ENCODE measurements at regions of chr6 and their contacts with region 1.

Region 1: GRCh38 chr6:2931970-2932748 is 29.1 kb upstream of the SERPINB9 start:
- DNase-seq: peak; percentile 74 to 90 (median 86)
- ATAC-seq: peak; percentile 86
- H3K4me3 ChIP-seq: no peak overlapping the region
- H3K4me3 Mint-ChIP-seq: peak overlapping the region; percentile 45
- H3K27ac ChIP-seq: no peak overlapping the region
- H3K27ac Mint-ChIP-seq: peak overlapping the region; percentile 38
- H3K4me1 ChIP-seq: peaks cover 27% of the 10 kb centered on the region
- H3K4me1 Mint-ChIP-seq: peaks cover 27% of the 10 kb centered on the region
- H3K27me3 ChIP-seq: no peaks in the 10 kb centered on the region
- H3K27me3 Mint-ChIP-seq: no peaks in the 10 kb centered on the region
- CTCF ChIP-seq: peak; percentile 92

Region 2: GRCh38 chr6:2634139-2634964 is 297.8 kb before region 1 on chr6:
- CTCF ChIA-PET with region 1: no interaction called
- POLR2A ChIA-PET with region 1: no interaction called
- intact Hi-C with region 1: no loop called
- DNase-seq: peak; percentile 62 to 92 (median 80)
- ATAC-seq: peak; percentile 95
- H3K4me3 ChIP-seq: peak overlapping the region; percentile 35 to 52
- H3K4me3 Mint-ChIP-seq: peak overlapping the region; percentile 70
- H3K27ac ChIP-seq: no peak overlapping the region
- H3K27ac Mint-ChIP-seq: no peak overlapping the region
- H3K4me1 ChIP-seq: peaks cover 6% of the 10 kb centered on the region
- H3K4me1 Mint-ChIP-seq: peaks cover 9% of the 10 kb centered on the region
- H3K27me3 ChIP-seq: peaks cover 0 to 6% of the 10 kb centered on the region in 2 experiments
- H3K27me3 Mint-ChIP-seq: peaks cover 9% of the 10 kb centered on the region
- CTCF ChIP-seq: peak; percentile 90

Region 3: GRCh38 chr6:2841264-2842138 is 90.7 kb before region 1 on chr6 and contains the start of gene SERPINB1:
- CTCF ChIA-PET with region 1: interaction called, 306 read pairs
- POLR2A ChIA-PET with region 1: interaction called, 21 read pairs
- intact Hi-C with region 1: loop called (anchors 1 kb)
- DNase-seq: peak; percentile 47 to 88 (median 71)
- ATAC-seq: peak; percentile 77
- H3K4me3 ChIP-seq: peak within 1 kb of the TSS; percentile 56 to 76
- H3K4me3 Mint-ChIP-seq: peak within 1 kb of the TSS; percentile 88
- H3K27ac ChIP-seq: peak within 1 kb of the TSS; percentile 58 to 68
- H3K27ac Mint-ChIP-seq: peak within 1 kb of the TSS; percentile 92
- H3K4me1 ChIP-seq: peaks cover 30% of the 10 kb centered on the region
- H3K4me1 Mint-ChIP-seq: peaks cover 56% of the 10 kb centered on the region
- H3K27me3 ChIP-seq: no peaks in the 10 kb centered on the region
- H3K27me3 Mint-ChIP-seq: no peaks in the 10 kb centered on the region
- CTCF ChIP-seq: no peak
- total RNA-seq, gene SERPINB1: 48.8 to 50.7 TPM

Region 4: DNA sequence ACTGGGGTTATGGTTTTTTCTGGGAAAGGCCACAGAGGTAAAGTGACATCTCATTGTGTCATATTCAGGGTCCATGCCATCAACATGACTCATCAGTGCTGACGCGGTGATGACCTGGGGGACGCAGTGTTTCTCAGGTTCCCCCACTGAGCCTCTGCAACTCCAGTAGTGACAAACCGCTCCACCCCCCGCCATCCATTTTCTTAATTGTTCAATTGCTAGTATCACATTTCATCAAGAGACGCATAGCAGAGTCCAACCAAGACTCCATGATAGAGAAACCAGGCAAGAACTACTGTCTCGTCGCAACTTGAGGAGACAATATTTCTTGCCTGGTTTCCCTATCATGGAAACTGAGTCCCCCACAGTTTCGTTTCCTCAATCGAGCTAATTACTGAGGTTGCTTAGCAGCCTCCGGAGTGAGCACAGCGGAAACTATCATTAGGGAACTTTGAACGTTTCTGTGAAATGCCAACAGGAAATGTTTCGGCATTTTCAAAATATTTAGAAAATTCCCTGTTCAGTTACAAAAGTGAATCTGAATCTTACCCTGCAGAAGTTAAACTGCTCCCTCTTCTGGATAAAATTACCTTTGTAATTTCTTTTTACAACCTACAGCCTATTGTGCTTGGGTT is 78.3 kb before region 1 on chr6:
- CTCF ChIA-PET with region 1: interaction called, 306 read pairs
- POLR2A ChIA-PET with region 1: interaction called, 8 read pairs
- intact Hi-C with region 1: loop called in 1 of 2 experiments (anchors 2 kb)
- DNase-seq: peak in 7 of 9 experiments; percentile 44 to 91 (median 76)
- ATAC-seq: peak; percentile 46
- H3K4me3 ChIP-seq: peak overlapping the region; percentile 43 to 47
- H3K4me3 Mint-ChIP-seq: peak overlapping the region; percentile 77
- H3K27ac ChIP-seq: peak overlapping the region; percentile 49 to 97
- H3K27ac Mint-ChIP-seq: peak overlapping the region; percentile 93
- H3K4me1 ChIP-seq: peaks cover 60% of the 10 kb centered on the region
- H3K4me1 Mint-ChIP-seq: peaks cover 65% of the 10 kb centered on the region
- H3K27me3 ChIP-seq: no peaks in the 10 kb centered on the region
- H3K27me3 Mint-ChIP-seq: no peaks in the 10 kb centered on the region
- CTCF ChIP-seq: peak; percentile 52

Region 5: DNA sequence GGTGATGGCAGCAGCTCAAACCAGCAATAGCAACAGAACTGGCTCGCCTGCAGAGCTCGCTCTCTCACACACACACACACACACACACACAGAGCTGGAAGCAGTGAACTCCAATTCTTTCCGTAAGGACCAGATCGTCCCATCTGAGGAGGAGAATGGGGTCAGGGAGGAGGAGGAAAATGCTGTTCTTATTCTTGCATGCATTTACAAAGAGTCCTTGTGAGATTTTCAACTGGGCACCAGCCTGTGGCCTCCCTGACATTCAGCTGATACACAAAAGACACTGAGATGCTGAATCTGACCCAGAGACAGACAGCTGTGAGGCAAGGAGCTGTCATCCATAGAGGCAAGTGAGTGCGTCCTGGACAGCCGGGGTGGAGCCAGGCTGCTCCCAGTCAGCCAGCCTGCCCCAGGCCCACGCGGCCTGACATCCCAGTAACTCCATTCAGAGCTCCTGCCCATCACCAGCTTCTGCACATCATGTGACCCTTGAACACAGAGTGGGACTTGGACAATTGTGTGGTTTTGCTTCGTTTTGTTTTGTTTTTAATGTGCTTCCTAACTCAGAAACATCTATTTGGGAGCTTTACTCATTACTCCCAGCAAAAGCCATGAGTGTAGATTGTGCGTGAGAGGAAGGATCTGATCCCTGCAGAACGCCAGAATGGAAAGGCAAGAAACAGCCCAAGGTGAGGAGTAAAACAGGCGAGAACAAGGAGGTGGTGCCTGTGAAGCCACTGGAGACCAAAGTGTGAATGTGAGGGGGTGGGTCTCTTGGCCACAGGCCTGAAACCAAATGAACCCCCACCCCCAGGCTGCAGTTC is 31.1 kb before region 1 on chr6:
- CTCF ChIA-PET with region 1: interaction called, 21 read pairs
- POLR2A ChIA-PET with region 1: interaction called, 4 read pairs
- intact Hi-C with region 1: no loop called
- DNase-seq: peak in 1 of 9 experiments; percentile 46
- ATAC-seq: no peak
- H3K4me3 ChIP-seq: peak overlapping the region; percentile 73 to 90
- H3K4me3 Mint-ChIP-seq: peak overlapping the region; percentile 99
- H3K27ac ChIP-seq: peak overlapping the region; percentile 67 to 82
- H3K27ac Mint-ChIP-seq: peak overlapping the region; percentile 96
- H3K4me1 ChIP-seq: peaks cover 37% of the 10 kb centered on the region
- H3K4me1 Mint-ChIP-seq: peaks cover 60% of the 10 kb centered on the region
- H3K27me3 ChIP-seq: no peaks in the 10 kb centered on the region
- H3K27me3 Mint-ChIP-seq: no peaks in the 10 kb centered on the region
- CTCF ChIP-seq: no peak

Region 6: DNA sequence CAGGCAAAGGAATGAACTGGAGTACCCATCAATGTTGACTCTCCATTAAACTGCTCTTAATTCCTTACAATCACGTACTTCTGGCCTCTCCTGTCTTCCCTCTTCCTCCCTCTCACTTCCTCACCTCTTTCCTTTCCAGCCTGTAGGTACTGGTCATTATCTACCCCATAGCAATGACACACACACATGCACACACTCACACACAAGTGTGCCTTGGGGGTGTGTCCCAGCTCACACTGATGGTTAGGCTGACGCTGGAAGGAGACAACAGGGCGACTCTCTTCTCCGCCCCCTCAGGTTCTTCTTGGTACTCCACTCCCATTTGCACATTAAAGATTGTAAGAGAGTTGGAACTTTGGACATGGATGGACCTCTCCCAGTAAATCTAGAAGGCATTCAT is 15.1 kb before region 1 on chr6:
- CTCF ChIA-PET with region 1: interaction called, 31 read pairs
- POLR2A ChIA-PET with region 1: no interaction called
- intact Hi-C with region 1: no loop called
- DNase-seq: peak in 1 of 9 experiments; percentile 1
- ATAC-seq: no peak
- H3K4me3 ChIP-seq: no peak overlapping the region
- H3K4me3 Mint-ChIP-seq: no peak overlapping the region
- H3K27ac ChIP-seq: peak overlapping the region in 1 of 2 experiments; percentile 51
- H3K27ac Mint-ChIP-seq: no peak overlapping the region
- H3K4me1 ChIP-seq: no peaks in the 10 kb centered on the region
- H3K4me1 Mint-ChIP-seq: peaks cover 11% of the 10 kb centered on the region
- H3K27me3 ChIP-seq: no peaks in the 10 kb centered on the region
- H3K27me3 Mint-ChIP-seq: no peaks in the 10 kb centered on the region
- CTCF ChIP-seq: no peak

Region 7: DNA sequence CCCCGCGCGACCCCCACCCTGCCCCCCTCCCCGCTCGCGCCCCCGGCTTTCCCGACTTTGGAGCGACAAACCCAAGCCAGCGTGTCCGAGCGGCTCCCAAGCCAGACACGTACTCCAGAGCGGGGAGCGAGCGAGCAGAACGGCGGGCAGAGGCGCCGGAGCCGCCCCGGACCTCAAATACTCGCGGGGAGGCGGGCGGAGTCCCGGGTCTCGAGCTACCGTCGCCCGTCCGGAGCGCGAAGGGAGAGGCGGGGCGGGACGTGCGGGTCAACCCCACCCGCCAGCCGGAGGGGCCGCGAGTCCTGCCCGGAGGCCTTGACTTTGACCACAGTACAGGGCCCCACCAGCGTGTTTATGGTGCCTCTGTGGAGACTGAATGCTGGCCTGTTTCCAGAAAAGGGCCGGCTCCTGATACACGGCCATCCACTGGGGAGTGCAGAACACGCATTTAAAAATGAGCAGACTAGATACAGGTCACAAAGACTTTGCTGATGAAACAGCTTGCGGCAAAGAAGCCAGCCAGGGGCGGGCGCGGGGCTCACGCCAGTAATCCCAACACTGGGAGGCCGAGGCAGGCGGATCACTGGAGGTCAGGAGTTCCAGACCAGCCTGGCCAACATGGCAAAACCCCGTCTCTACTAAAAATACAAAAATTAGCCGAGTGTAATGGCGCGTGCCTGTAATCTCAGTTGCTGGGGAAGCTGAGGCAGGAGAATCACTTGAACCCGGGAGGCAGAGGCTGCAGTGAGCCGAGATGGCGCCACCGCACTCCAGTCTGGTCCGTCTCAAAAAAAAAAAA is 39.5 kb after region 1 on chr6 and contains the start of gene SERPINB6:
- CTCF ChIA-PET with region 1: interaction called, 6 read pairs
- POLR2A ChIA-PET with region 1: interaction called, 4 read pairs
- intact Hi-C with region 1: loop called in 1 of 2 experiments (anchors 1 kb)
- DNase-seq: peak in 8 of 9 experiments; percentile 24 to 69 (median 42)
- ATAC-seq: peak; percentile 54
- H3K4me3 ChIP-seq: peak within 1 kb of the TSS; percentile 61 to 77
- H3K4me3 Mint-ChIP-seq: peak within 1 kb of the TSS; percentile 90
- H3K27ac ChIP-seq: peak within 1 kb of the TSS; percentile 64
- H3K27ac Mint-ChIP-seq: peak within 1 kb of the TSS; percentile 92
- H3K4me1 ChIP-seq: peaks cover 21% of the 10 kb centered on the region
- H3K4me1 Mint-ChIP-seq: peaks cover 53% of the 10 kb centered on the region
- H3K27me3 ChIP-seq: no peaks in the 10 kb centered on the region
- H3K27me3 Mint-ChIP-seq: no peaks in the 10 kb centered on the region
- CTCF ChIP-seq: no peak
- total RNA-seq, gene SERPINB6: 41.7 to 45.6 TPM